HepG2 (cell line): ENCODE measurements at regions of chr3 and their contacts with region 1.

Region 1: DNA sequence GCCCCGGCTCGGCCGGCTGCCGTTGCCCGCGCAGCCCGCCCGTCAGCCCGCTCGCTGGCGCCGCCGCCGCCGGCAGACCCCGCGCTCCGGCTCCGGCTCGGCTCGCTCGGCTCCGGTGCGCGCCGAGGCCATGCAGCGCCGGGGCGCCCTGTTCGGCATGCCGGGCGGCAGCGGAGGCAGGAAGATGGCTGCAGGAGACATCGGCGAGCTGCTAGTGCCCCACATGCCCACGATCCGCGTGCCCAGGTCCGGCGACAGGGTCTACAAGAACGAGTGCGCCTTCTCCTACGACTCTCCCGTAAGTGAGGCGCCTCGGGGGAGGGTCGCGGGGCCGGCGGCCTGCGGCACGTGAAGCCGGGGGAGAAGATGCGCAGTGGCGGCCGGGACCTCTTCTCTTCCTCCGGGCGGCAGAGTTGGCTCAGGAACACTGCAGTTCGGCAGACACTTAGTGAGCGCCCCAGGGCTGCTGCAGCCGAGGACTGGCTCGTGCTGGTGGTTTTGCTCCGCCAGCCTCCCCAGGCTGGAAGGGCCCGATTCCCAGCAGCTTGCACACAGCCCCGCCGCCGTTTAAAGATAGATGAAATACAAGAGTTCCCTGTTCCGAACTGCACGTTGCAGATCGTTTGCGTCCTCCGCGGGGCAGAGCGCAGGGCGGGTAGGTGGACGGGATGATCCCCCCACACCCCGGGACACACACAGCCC is 407 bp downstream of the USP13 start:
- DNase-seq: peak; percentile 45
- ATAC-seq: peak; percentile 85
- H3K4me3 ChIP-seq: peak overlapping the region; percentile 77 to 98 (median 92)
- H3K27ac ChIP-seq: peak overlapping the region; percentile 86
- H3K4me1 ChIP-seq: peaks cover 51% of the 10 kb centered on the region
- H3K27me3 ChIP-seq: no peaks in the 10 kb centered on the region
- CTCF ChIP-seq: peak; percentile 72
- EP300 ChIP-seq: no peak
- POLR2A ChIP-seq: no peak; a peak in 1 of 4 replicates
- RAD21 ChIP-seq: peak; percentile 35; the same call in 1 of the 2 replicates

Region 2: DNA sequence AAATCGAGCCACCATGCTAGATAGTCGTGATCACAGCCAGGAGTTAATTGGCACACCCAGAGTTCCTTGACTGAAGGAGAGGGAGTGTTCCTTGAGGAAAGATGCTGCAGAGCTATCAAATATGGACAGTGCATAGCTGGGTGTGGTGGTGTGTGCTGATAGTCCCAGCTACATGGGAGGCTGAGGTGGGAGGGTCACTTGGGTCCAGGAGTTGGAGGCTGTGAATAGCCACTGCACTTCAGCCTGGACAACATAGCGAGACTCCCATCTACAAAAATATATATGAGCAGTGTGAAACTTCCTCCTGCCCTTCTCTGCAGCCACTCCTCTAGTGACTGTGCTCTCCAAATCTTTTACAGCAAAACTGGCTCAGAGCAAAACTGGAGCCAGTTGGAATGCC is 10.4 kb before region 1 on chr3:
- CTCF ChIA-PET with region 1: no interaction called
- POLR2A ChIA-PET with region 1: interaction called, 30 read pairs
- in situ Hi-C with region 1: no loop called
- intact Hi-C with region 1: no loop called
- DNase-seq: no peak
- ATAC-seq: no peak
- H3K4me3 ChIP-seq: no peak overlapping the region
- H3K27ac ChIP-seq: peak overlapping the region; percentile 88
- H3K4me1 ChIP-seq: peaks cover 32% of the 10 kb centered on the region
- H3K27me3 ChIP-seq: no peaks in the 10 kb centered on the region; a peak in 1 of 5 replicates
- CTCF ChIP-seq: no peak
- EP300 ChIP-seq: no peak
- POLR2A ChIP-seq: no peak
- RAD21 ChIP-seq: no peak

Region 3: DNA sequence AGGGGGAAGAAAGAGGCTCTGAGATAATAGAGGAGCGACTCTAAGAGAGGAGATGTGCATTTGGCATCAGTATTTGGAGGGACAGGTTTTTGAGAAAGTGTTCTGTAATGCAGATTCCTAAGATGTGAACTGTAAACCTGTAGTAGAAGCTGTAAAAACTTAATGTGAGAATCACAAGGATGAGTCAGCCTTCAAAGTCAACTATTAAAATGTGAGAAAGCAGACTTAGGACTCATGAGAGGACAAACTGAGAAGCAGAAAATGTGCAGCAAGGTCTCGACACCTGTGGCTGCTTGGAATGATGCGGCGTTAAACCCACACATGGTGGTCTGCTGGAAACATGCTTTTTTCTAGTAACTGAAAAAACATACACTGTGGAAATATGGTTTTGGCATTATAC is 35.6 kb after region 1 on chr3:
- CTCF ChIA-PET with region 1: no interaction called
- POLR2A ChIA-PET with region 1: no interaction called
- in situ Hi-C with region 1: no loop called
- intact Hi-C with region 1: loop called (anchors 5 kb)
- DNase-seq: no peak
- ATAC-seq: no peak
- H3K4me3 ChIP-seq: no peak overlapping the region
- H3K27ac ChIP-seq: no peak overlapping the region
- H3K4me1 ChIP-seq: no peaks in the 10 kb centered on the region
- H3K27me3 ChIP-seq: no peaks in the 10 kb centered on the region
- CTCF ChIP-seq: no peak
- EP300 ChIP-seq: no peak
- POLR2A ChIP-seq: no peak
- RAD21 ChIP-seq: no peak

Region 4: GRCh38 chr3:179732661-179733348 is 79.6 kb after region 1 on chr3:
- CTCF ChIA-PET with region 1: no interaction called
- POLR2A ChIA-PET with region 1: interaction called, 5 read pairs
- in situ Hi-C with region 1: no loop called
- intact Hi-C with region 1: loop called (anchors 5 kb)
- DNase-seq: peak; percentile 85
- ATAC-seq: peak; percentile 91
- H3K4me3 ChIP-seq: no peak overlapping the region
- H3K27ac ChIP-seq: peak overlapping the region; percentile 77
- H3K4me1 ChIP-seq: peaks cover 69% of the 10 kb centered on the region
- H3K27me3 ChIP-seq: no peaks in the 10 kb centered on the region
- CTCF ChIP-seq: no peak
- EP300 ChIP-seq: peak in 1 of 2 experiments; percentile 80; a peak in 2 of 4 replicates
- POLR2A ChIP-seq: no peak
- RAD21 ChIP-seq: no peak